ENCODE measurements at regions of chr20 and their contacts with region 1.

Region 1: GRCh38 chr20:56411759-56412472 is at the start of gene CASS4:
- DNase-seq: peak; percentile 63
- ATAC-seq: peak; percentile 53
- H3K4me3 Mint-ChIP-seq: peak within 1 kb of the TSS; percentile 69
- H3K27ac Mint-ChIP-seq: peak within 1 kb of the TSS; percentile 94
- H3K4me1 Mint-ChIP-seq: peaks cover 47% of the 10 kb centered on the region
- H3K27me3 Mint-ChIP-seq: no peaks in the 10 kb centered on the region
- total RNA-seq, gene CASS4: 5.1 to 5.6 TPM

Region 2: GRCh38 chr20:56350842-56351241 is 61.1 kb before region 1 on chr20:
- CTCF ChIA-PET with region 1: no interaction called
- POLR2A ChIA-PET with region 1: no interaction called
- intact Hi-C with region 1: no loop called
- DNase-seq: no peak
- ATAC-seq: no peak
- H3K4me3 Mint-ChIP-seq: no peak overlapping the region
- H3K27ac Mint-ChIP-seq: no peak overlapping the region
- H3K4me1 Mint-ChIP-seq: no peaks in the 10 kb centered on the region
- H3K27me3 Mint-ChIP-seq: peaks cover 16% of the 10 kb centered on the region

Region 3: DNA sequence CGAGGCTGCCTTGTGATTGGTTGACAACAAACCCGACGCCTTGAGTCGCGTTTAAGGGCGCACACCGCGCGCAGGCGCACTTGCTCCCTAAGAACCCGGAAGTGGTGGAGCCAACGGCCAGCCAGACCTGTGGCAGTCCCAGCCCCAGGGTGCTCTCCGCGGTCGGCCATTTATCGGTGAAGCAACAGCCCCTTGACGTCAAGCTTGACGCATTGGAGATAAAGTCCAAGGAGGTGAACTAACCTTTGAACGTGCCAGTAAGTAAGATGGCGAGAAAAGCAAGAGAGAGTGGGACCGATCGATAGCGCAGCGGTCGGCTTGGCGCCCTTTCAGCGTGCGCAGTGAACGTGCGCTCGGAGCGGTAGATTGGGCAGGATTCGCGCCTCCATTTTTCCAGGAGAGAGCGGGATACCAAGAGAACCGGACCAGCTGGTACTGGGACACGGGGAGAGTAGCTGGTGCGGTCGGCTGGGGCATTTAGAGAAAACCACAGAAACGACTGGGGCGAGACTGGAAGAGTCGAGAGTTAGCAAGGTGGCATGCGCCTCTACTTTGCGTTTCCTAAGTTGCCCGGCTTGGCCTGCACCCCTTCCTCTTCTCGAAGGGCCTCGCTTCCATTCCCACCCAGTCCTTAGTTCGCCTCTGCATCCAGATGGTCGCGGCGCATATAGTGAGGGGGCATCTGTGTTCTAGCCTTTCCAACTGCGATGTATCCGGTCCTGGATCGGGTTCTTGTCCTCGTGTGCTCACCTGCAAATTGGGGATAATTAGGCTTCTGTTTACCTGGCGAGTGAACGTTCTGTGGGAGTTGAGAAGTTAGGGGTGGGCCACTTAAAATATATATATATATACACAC is 19.4 kb before region 1 on chr20 and contains the start of gene CSTF1:
- CTCF ChIA-PET with region 1: interaction called, 14 read pairs
- POLR2A ChIA-PET with region 1: interaction called, 6 read pairs
- intact Hi-C with region 1: loop called (anchors 1 kb)
- DNase-seq: peak; percentile 100
- ATAC-seq: peak; percentile 90
- H3K4me3 Mint-ChIP-seq: no peak within 1 kb of the TSS
- H3K27ac Mint-ChIP-seq: no peak within 1 kb of the TSS
- H3K4me1 Mint-ChIP-seq: peaks cover 43% of the 10 kb centered on the region
- H3K27me3 Mint-ChIP-seq: no peaks in the 10 kb centered on the region
- total RNA-seq, gene CSTF1: 62.0 to 84.2 TPM

Region 4: GRCh38 chr20:56439771-56440291 is 27.9 kb after region 1 on chr20:
- CTCF ChIA-PET with region 1: no interaction called
- POLR2A ChIA-PET with region 1: no interaction called
- intact Hi-C with region 1: loop called in 1 of 2 experiments (anchors 1 kb)
- DNase-seq: peak; percentile 37
- ATAC-seq: peak; percentile 31
- H3K4me3 Mint-ChIP-seq: no peak overlapping the region
- H3K27ac Mint-ChIP-seq: peak overlapping the region; percentile 92
- H3K4me1 Mint-ChIP-seq: peaks cover 32% of the 10 kb centered on the region
- H3K27me3 Mint-ChIP-seq: no peaks in the 10 kb centered on the region

Region 5: DNA sequence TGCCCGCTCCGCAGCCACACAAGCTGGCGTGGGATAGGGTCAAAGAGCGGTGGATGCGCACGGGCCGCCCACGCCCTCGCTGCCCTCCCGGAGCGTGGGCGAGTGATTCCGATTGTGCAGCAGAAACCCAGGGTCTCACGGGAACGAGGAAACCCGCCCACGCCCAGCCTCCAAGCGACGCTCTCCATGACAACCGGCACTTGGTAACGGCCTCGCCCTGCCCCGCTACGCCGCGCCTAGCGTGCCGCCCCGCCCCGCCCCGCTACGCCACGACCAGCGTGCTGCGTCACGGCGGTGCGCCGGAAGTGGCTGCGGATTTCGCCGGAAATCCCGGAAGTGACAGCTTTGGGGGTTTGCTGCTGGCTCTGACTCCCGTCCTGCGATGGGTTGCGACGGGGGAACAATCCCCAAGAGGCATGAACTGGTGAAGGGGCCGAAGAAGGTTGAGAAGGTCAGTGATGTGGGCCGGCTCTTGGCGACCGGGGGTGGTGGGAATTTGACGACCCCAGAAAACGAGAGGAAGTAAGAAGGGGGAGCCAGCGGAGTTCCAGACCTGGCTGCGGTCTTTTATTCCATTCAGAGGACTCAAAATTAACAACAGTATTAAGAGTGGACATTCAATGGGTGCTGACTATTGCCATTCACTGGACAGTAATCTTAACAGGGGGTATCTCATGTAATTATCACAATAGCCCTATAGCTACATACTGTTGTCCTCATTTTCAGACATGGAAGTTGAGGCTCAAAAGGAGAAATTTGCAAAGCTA is 56.6 kb after region 1 on chr20 and contains the start of gene RTF2:
- CTCF ChIA-PET with region 1: interaction called, 4 read pairs
- POLR2A ChIA-PET with region 1: interaction called, 3 read pairs
- intact Hi-C with region 1: loop called (anchors 1 kb)
- DNase-seq: peak; percentile 98
- ATAC-seq: peak; percentile 97
- H3K4me3 Mint-ChIP-seq: peak within 1 kb of the TSS; percentile 100
- H3K27ac Mint-ChIP-seq: peak within 1 kb of the TSS; percentile 100
- H3K4me1 Mint-ChIP-seq: peaks cover 30% of the 10 kb centered on the region
- H3K27me3 Mint-ChIP-seq: no peaks in the 10 kb centered on the region
- total RNA-seq, gene RTF2: 68.5 to 80.8 TPM